Activated CD4-positive, alpha-beta T cell treated with anti-CD3 and anti-CD28 coated beads, Interleukin-2, amount 10 ng/mL, durations not matched to agents 7 days and 5 days (primary cell): ENCODE measurements at regions of chr2 and their contacts with region 1.

Region 1: GRCh38 chr2:219057709-219058540 is 2.8 kb downstream of the IHH start:
- DNase-seq: peak; percentile 76
- H3K4me3 Mint-ChIP-seq: no peak overlapping the region
- H3K27ac Mint-ChIP-seq: no peak overlapping the region
- H3K4me1 Mint-ChIP-seq: peaks cover 16% of the 10 kb centered on the region
- H3K27me3 Mint-ChIP-seq: peaks cover 69% of the 10 kb centered on the region

Region 2: GRCh38 chr2:218644721-218645120 is 413.2 kb before region 1 on chr2:
- CTCF ChIA-PET with region 1: no interaction called
- POLR2A ChIA-PET with region 1: no interaction called
- DNase-seq: no peak
- H3K4me3 Mint-ChIP-seq: no peak overlapping the region
- H3K27ac Mint-ChIP-seq: no peak overlapping the region
- H3K4me1 Mint-ChIP-seq: peaks cover 6% of the 10 kb centered on the region
- H3K27me3 Mint-ChIP-seq: no peaks in the 10 kb centered on the region

Region 3: GRCh38 chr2:219029829-219030165 is 28.1 kb before region 1 on chr2:
- CTCF ChIA-PET with region 1: interaction called, 12 read pairs
- POLR2A ChIA-PET with region 1: no interaction called
- DNase-seq: peak; percentile 76
- H3K4me3 Mint-ChIP-seq: no peak overlapping the region
- H3K27ac Mint-ChIP-seq: no peak overlapping the region
- H3K4me1 Mint-ChIP-seq: no peaks in the 10 kb centered on the region
- H3K27me3 Mint-ChIP-seq: peaks cover 18% of the 10 kb centered on the region

Region 4: GRCh38 chr2:219073413-219074129 is 15.6 kb after region 1 on chr2:
- CTCF ChIA-PET with region 1: interaction called, 12 read pairs
- POLR2A ChIA-PET with region 1: no interaction called
- DNase-seq: peak; percentile 18
- H3K4me3 Mint-ChIP-seq: no peak overlapping the region
- H3K27ac Mint-ChIP-seq: no peak overlapping the region
- H3K4me1 Mint-ChIP-seq: no peaks in the 10 kb centered on the region
- H3K27me3 Mint-ChIP-seq: no peaks in the 10 kb centered on the region

Region 5: DNA sequence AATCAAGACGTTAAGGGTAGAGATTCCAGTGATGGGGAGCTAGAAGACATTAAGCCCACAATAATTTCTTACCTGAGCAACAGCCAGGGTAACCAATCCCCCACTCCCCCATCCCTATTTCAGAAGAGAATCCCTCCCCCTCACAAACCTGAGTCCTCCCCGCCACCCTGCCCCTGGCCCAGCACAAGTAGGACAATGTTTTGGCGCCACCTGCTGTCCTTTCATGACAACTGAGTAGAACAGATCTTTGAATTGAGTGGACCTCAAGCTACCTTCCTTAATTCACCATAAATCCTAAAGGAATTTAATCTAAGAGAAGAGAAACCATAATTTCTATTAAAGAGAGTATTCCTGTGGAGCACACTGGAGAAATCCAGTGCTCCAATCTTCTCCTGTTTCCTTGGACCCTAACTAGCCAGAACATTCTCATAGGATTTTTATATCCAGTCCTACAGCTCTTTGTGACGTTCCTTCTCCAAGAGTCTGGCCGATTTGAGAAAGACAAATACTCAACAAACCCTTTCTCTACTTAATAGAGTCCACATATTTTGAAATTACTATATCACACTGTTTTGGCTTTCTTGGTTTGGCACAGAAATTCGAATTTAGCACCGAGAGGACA is 61.6 kb after region 1 on chr2:
- CTCF ChIA-PET with region 1: interaction called, 30 read pairs
- POLR2A ChIA-PET with region 1: no interaction called
- DNase-seq: peak; percentile 68
- H3K4me3 Mint-ChIP-seq: no peak overlapping the region
- H3K27ac Mint-ChIP-seq: no peak overlapping the region
- H3K4me1 Mint-ChIP-seq: peaks cover 7% of the 10 kb centered on the region
- H3K27me3 Mint-ChIP-seq: no peaks in the 10 kb centered on the region

Region 6: GRCh38 chr2:219186754-219187456 is 129.0 kb after region 1 on chr2:
- CTCF ChIA-PET with region 1: no interaction called
- POLR2A ChIA-PET with region 1: no interaction called
- DNase-seq: no peak
- H3K4me3 Mint-ChIP-seq: no peak overlapping the region
- H3K27ac Mint-ChIP-seq: no peak overlapping the region
- H3K4me1 Mint-ChIP-seq: peaks cover 30% of the 10 kb centered on the region
- H3K27me3 Mint-ChIP-seq: no peaks in the 10 kb centered on the region